H1 (cell line): ENCODE measurements at regions of chr7 and their contacts with region 1.

Region 1: DNA sequence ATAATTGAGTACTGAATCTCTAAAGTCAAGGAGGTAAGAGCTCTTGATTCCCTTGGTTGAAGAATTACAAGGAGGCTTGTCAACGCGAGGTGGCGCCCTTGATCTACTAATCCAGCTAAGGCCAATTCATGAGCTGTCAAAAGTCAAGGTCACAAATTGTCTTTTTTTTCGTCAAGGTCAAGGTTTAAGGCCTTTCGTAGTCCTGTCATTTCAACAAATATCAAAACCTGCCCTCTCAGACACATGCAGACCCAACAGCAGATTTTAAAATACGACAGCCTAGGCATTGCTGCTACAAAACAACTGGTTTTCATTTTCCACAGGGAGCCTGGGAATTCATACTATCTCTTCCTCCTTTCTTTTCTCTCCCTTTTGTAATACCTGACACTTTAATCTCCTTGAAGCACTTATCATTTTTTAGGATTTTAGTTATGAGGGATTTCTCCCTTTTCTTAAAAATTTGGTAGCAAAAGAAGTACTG is 3.6 kb downstream of the HOXA13 start:
- DNase-seq: peak in 1 of 2 experiments; percentile 90
- H3K4me3 ChIP-seq: no peak overlapping the region
- H3K27ac ChIP-seq: no peak overlapping the region
- H3K4me1 ChIP-seq: peaks cover 0 to 6% (median 4%) of the 10 kb centered on the region in 4 experiments; a peak in 4 of 7 replicates
- H3K27me3 ChIP-seq: peaks cover 83 to 100% (median 95%) of the 10 kb centered on the region in 4 experiments
- CTCF ChIP-seq: peak; percentile 9 to 82 (median 76)
- EP300 ChIP-seq: no peak
- POLR2A ChIP-seq: no peak
- RAD21 ChIP-seq: peak; percentile 96 to 97

Region 2: GRCh38 chr7:27130540-27131389 is 65.6 kb before region 1 on chr7 and contains the start of gene HOXA4:
- CTCF ChIA-PET with region 1: no interaction called
- POLR2A ChIA-PET with region 1: no interaction called
- DNase-seq: peak in 1 of 2 experiments; percentile 91
- H3K4me3 ChIP-seq: peak within 1 kb of the TSS; percentile 19 to 60 (median 36); a peak in 7 of 8 replicates
- H3K27ac ChIP-seq: no peak within 1 kb of the TSS
- H3K4me1 ChIP-seq: peaks cover 0 to 4% (median 2%) of the 10 kb centered on the region in 4 experiments; a peak in 4 of 7 replicates
- H3K27me3 ChIP-seq: peaks cover 97 to 100% (median 100%) of the 10 kb centered on the region in 4 experiments
- CTCF ChIP-seq: no peak
- EP300 ChIP-seq: no peak
- POLR2A ChIP-seq: no peak
- RAD21 ChIP-seq: no peak
- total RNA-seq, gene HOXA4: not detected in 2 replicates

Region 3: DNA sequence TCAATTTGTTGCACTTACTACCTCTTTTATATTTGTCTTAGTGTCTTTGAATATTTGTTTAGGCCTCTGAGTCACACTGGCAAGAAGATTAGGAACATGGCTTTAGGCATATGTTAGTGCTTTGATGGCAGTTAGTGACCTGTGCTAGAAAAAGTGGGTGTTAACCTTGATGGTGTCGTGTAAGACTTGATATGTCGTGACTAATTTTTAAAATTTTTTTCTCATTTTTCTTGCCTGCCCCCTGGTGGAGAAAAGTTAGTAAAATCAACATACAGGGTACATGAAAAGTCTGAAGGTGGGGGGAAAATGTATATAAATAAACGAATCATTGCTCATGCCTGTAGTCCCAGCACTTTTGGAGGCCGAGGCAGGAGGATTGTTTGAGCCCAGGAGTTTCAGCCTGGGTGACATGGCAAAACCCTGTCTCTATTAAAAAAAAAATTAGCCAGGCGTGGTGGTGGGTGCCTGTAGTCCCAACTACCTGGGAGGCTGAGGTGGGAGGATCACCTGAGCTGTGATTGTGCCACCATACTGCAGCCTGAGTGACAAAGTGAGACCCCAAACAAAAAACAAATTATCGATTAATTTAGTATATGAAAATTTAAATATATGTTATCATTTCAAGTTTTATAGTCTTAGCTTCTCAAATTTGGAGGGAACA is 588.2 kb after region 1 on chr7:
- CTCF ChIA-PET with region 1: interaction called, 11 read pairs
- POLR2A ChIA-PET with region 1: no interaction called
- DNase-seq: no peak
- H3K4me3 ChIP-seq: no peak overlapping the region
- H3K27ac ChIP-seq: no peak overlapping the region
- H3K4me1 ChIP-seq: no peaks in the 10 kb centered on the region
- H3K27me3 ChIP-seq: no peaks in the 10 kb centered on the region
- CTCF ChIP-seq: peak in 2 of 3 experiments; percentile 15 to 25; a peak in 2 of 4 replicates
- EP300 ChIP-seq: no peak
- POLR2A ChIP-seq: no peak
- RAD21 ChIP-seq: no peak; a peak in 1 of 4 replicates